Activated B cell treated with CpG ODN at 0.5 μM for 24 hours (primary cell): ENCODE measurements at regions of chr6 and their contacts with region 1.

Region 1: DNA sequence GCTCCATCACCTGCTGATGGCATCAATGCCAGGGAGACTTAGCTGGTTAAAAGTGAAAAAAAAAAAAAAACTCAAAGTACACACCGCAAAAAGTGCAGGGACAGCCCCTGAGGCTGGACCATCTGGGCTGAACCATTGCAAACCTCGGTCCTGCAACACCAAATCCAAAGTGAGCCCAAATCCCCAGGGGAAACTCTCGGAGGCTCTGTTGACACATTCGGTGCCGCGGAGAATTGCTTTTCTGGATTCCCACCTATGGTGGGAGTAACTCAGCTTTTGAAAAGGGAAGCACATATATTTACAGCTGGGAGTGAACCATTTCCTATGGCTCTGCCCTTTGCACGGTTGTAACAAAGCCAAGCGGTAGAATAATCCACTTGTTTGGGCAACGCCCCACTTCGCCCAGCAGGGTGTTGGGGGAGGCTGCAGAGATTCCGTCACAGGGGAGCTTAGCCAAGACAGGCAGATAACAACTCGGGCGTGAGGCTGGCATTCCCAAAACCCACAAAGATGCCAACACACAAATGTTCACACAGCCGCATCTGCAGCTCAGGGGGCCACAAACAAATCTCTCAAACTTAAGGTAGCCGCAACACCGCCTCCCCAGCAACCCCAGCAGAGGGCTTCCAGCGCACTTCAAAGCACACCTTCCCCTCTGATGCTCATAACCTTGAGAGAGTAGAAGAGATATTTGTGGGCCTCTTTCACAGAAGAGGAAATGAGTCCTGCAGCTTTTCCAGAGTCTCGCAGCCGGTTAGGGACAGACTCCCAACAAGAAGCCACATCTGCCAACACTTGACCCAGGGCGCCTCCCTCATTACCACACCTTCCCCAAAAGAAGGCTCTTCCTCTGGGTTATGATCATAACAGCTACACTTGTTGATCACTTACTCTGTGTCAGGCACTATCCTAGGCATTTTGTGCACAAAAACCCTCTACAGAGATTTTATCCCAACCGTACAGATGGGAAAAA is 11.4 kb downstream of the ZC3H12D start:
- DNase-seq: peak; percentile 44
- ATAC-seq: peak; percentile 31
- H3K4me3 Mint-ChIP-seq: peak overlapping the region; percentile 81
- H3K27ac Mint-ChIP-seq: peak overlapping the region; percentile 91
- H3K4me1 Mint-ChIP-seq: peaks cover 93% of the 10 kb centered on the region
- H3K27me3 Mint-ChIP-seq: no peaks in the 10 kb centered on the region
- CTCF ChIP-seq: no peak

Region 2: GRCh38 chr6:149419696-149420404 is 53.5 kb before region 1 on chr6:
- CTCF ChIA-PET with region 1: no interaction called
- POLR2A ChIA-PET with region 1: interaction called, 15 read pairs
- intact Hi-C with region 1: no loop called
- DNase-seq: no peak
- ATAC-seq: no peak
- H3K4me3 Mint-ChIP-seq: no peak overlapping the region
- H3K27ac Mint-ChIP-seq: no peak overlapping the region
- H3K4me1 Mint-ChIP-seq: peaks cover 2% of the 10 kb centered on the region
- H3K27me3 Mint-ChIP-seq: no peaks in the 10 kb centered on the region
- CTCF ChIP-seq: no peak

Region 3: DNA sequence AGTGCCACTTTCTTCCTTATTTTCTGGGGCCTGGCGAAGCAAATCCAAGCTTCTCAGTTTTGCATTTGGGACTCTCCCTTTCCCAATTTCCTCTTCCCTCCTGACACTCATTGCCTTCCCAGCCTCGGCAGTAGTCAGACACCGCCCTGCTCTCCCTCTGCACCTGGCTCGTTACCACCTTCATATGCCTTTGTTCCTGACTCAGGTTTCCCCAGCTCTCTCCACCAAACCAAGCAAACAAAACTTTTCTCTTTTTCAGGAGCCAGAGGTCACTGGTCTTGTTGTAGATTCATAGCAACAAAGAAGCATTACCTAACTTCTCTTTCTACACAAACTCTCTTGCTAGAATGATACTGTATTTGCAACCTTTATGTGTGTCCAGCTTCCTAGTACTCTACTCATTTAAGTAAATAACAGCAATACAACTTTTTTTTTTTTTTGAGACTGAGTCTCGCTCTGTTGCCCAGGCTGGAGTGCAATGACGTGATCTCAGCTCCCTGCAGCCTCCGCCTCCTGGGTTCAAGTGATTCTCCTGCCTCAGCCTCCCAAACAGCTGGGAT is 20.5 kb after region 1 on chr6:
- CTCF ChIA-PET with region 1: interaction called, 3 read pairs
- POLR2A ChIA-PET with region 1: interaction called, 53 read pairs
- intact Hi-C with region 1: loop called (anchors 1 kb)
- DNase-seq: no peak
- ATAC-seq: no peak
- H3K4me3 Mint-ChIP-seq: peak overlapping the region; percentile 29
- H3K27ac Mint-ChIP-seq: peak overlapping the region; percentile 87
- H3K4me1 Mint-ChIP-seq: peaks cover 88% of the 10 kb centered on the region
- H3K27me3 Mint-ChIP-seq: no peaks in the 10 kb centered on the region
- CTCF ChIP-seq: no peak

Region 4: GRCh38 chr6:149683256-149683859 is 210.0 kb after region 1 on chr6:
- CTCF ChIA-PET with region 1: no interaction called
- POLR2A ChIA-PET with region 1: no interaction called
- intact Hi-C with region 1: no loop called
- DNase-seq: no peak
- ATAC-seq: no peak
- H3K4me3 Mint-ChIP-seq: no peak overlapping the region
- H3K27ac Mint-ChIP-seq: no peak overlapping the region
- H3K4me1 Mint-ChIP-seq: peaks cover 8% of the 10 kb centered on the region
- H3K27me3 Mint-ChIP-seq: no peaks in the 10 kb centered on the region
- CTCF ChIP-seq: no peak

Region 5: DNA sequence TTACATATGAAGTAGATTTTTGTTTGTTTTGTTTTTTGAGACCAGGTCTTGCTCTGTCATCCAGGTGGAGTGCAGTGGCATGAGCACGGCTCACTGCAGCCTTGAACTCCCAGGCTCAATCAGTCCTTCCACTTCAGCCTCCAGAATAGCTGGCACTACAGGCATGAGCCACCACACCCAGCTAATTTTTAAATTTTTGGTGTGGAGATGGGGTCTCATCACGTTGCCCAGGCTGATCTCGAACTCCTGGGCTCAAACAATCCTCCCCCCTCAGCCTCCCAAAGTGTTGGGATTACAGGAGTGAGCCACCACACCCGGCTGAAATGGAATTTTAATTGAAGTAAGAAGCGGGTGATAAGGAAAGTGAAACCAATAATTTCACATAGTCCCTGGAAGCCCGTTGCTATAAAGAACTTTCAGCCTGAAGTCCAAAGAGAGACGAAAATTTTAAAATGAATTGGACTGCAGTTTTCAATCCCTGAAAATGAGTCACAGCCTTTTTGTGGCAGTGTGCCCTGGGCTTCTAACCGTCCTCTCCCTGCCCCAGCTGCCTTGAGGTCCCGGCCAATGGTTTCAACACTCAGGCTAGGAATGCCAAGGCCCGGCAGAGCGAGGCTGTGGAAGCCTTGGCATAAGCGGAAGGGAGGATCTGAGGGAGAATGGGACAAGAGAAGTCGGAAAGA is 423.8 kb after region 1 on chr6:
- CTCF ChIA-PET with region 1: no interaction called
- POLR2A ChIA-PET with region 1: no interaction called
- intact Hi-C with region 1: no loop called
- DNase-seq: no peak
- ATAC-seq: no peak
- H3K4me3 Mint-ChIP-seq: no peak overlapping the region
- H3K27ac Mint-ChIP-seq: no peak overlapping the region
- H3K4me1 Mint-ChIP-seq: no peaks in the 10 kb centered on the region
- H3K27me3 Mint-ChIP-seq: peaks cover 36% of the 10 kb centered on the region
- CTCF ChIP-seq: no peak